ENCODE measurements at regions of chr16 and their contacts with region 1.

Region 1: DNA sequence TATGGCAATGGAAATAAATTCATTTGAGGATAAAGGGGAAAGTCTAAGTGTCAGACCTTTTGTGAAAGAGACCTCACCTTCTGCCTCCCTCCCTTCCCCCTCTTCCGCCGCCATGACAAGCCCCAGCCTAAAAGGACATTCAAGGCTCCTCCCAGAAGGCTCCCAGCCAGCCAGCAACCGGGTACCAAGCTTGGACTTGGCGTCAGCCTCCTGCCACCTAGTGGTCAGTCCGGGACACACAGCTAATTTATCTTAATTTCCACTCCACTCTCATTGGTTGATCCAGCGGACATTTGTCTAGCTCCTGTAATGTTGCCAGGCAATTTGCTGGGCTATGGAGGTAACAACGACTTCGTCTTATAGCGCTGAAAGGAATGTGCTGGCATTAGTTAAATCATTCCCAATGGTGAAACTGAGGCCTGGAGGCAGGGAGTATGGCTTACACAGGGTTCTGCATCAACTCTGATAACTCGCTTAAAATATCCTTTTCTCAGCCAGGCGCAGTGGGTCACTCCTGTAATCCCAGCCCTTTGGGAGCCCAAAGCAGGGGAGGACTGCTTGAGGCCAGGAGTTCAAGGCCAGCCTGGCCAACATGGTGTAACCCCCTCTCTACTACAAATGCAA is 19.3 kb upstream of the CLEC3A start:
- DNase-seq: peak; percentile 55
- H3K4me3 Mint-ChIP-seq: no peak overlapping the region
- H3K27ac Mint-ChIP-seq: no peak overlapping the region
- H3K4me1 Mint-ChIP-seq: peaks cover 5% of the 10 kb centered on the region
- H3K27me3 Mint-ChIP-seq: peaks cover 2% of the 10 kb centered on the region

Region 2: DNA sequence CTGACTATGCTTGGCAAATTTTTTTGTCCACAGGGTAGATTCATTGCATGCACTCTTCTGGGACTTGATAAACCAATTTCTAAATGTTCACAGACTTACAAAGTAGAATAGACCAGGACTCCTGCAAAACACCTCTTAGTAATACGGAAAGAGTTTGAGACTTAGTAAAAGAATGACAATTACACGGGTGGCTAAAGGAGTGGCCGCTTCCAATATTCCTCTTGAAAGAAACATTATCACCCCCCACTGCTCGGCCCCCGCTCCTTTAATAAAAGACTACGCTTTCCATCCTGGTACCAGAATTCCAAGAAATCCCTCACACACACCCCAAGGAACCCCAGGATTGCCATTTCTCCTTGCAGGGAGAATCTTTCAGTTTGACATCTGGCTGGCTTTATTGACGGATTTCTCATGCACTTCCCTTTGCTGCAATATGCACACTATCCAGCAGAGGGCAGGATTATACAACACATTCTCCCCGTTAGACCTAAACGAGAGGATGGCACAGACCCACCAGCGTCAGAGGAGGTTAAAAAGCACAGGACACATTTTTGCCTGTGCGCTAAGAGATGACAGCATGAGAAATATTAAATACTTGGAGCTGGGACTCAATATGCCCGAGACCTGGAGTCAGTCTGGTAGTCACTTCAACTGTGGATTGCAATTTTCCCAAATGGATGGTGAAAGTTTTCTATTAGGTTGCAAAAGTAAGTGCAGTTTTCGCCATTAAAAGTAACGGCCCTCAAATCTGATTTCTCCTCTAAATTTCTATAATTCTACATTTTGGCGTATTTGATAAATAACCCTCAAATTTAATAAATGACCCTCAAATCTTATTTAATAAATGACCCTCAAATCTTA is 327.3 kb before region 1 on chr16:
- intact Hi-C with region 1: loop called (anchors 1 kb)
- DNase-seq: peak; percentile 36
- H3K4me3 Mint-ChIP-seq: no peak overlapping the region
- H3K27ac Mint-ChIP-seq: no peak overlapping the region
- H3K4me1 Mint-ChIP-seq: no peaks in the 10 kb centered on the region
- H3K27me3 Mint-ChIP-seq: peaks cover 7% of the 10 kb centered on the region

Region 3: DNA sequence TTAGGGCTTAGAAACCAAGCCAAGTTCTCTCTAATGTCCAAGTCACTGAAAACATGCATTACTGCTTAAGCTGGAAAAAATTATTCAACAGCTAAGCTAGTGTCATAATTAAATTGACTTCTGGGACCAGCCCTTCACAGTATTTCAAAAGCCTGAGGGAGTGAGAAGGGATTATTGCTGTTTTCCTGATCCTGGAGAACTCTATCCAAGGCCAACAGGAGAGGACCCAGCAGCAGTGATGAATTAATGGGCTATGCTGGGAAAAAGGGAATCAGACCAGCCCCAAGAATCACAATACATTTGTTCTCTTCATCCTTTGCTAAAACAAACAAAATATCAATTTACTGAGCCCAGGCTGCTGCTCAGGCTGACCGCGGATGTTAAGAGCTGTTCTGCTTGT is 15.2 kb before region 1 on chr16:
- intact Hi-C with region 1: no loop called
- DNase-seq: no peak
- H3K4me3 Mint-ChIP-seq: no peak overlapping the region
- H3K27ac Mint-ChIP-seq: no peak overlapping the region
- H3K4me1 Mint-ChIP-seq: no peaks in the 10 kb centered on the region
- H3K27me3 Mint-ChIP-seq: peaks cover 2% of the 10 kb centered on the region

Measured in activated T-helper 1 cell treated with anti-CD3 and anti-CD28 coated beads, Interleukin-12 subunit alpha, Interleukin-12 subunit beta, Interleukin-2, Interleukin-4 antibody, amounts not matched to agents 30 ng/mL and 10 ng/mL and 1 ng/mL, durations not matched to agents 14 hours and 24 hours and 36 hours (primary cell).